ENCODE measurements at regions of chr6 and their contacts with region 1.

Region 1: DNA sequence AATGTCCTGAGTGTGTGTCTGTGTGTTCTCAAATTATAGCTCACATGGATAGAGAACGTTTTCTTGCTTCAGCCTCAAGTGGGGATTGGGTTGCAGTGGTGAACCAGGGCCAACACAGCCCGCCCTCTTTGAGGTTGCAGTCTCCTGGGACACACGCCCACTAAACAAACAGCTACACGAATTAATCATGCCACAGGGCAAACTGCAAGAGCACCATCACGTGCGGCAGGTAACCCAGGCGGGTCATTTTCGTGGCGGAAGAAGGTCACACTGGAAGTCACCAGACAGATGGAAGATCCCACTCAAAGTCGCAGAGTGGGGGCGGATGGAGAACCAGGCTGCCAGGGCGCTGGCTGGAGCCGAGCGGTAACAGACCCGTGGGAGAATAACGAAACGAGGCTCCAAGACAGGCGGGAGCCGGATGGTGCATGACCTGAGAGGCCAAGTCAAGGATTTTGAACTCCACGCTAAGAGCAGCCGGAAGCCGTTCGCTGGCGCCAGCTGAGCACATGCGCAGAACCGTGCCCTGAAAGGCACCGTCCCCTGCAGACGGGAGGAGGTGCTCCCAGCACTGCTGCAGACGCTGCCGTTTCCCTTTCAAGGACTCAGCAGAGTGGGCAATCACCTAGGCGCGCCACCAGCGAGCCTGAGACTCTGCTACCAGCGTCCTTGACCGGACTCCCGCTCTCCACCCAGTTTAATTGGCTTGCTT is 10.7 kb downstream of the DLL1 start:
- DNase-seq: peak in 3 of 10 donors; percentile 27 to 36 (median 34)
- H3K4me3 ChIP-seq: peak overlapping the region in 45 of 59 donors; percentile 4 to 57 (median 28)
- H3K27ac ChIP-seq: peak overlapping the region in 8 of 59 donors; percentile 6 to 54 (median 23)
- H3K27me3 ChIP-seq: no peaks in the 10 kb centered on the region
- CTCF ChIP-seq: no peak

Region 2: DNA sequence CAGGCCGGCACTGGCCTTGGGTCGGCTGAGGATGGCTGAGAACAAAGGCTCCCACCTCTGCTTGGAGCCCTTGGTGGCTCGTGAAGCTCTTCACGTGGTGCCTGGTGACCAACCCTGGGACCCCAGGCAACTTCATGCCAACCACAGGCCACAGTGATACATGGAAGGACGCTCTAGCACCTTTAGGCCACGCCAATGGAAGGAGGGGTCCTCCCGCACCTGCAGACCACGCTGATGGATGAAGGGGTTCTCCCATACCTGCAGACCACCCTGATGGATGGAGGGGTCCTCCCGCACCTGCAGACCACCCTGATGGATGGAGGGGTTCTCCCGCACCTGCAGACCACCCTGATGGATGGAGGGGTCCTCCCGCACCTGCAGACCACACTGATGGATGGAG is 466.2 kb before region 1 on chr6:
- intact Hi-C with region 1: no loop called
- DNase-seq: peak in 2 of 10 donors; percentile 17 to 23
- H3K4me3 ChIP-seq: no peak overlapping the region
- H3K27ac ChIP-seq: no peak overlapping the region
- H3K27me3 ChIP-seq: no peaks in the 10 kb centered on the region
- CTCF ChIP-seq: no peak

Region 3: GRCh38 chr6:170024952-170025911 is 254.9 kb before region 1 on chr6:
- intact Hi-C with region 1: no loop called
- DNase-seq: peak in 3 of 10 donors; percentile 31 to 36 (median 34)
- H3K4me3 ChIP-seq: no peak overlapping the region
- H3K27ac ChIP-seq: no peak overlapping the region
- H3K27me3 ChIP-seq: peaks cover 0 to 20% (median 0%) of the 10 kb centered on the region in 45 donors
- CTCF ChIP-seq: no peak

Region 4: DNA sequence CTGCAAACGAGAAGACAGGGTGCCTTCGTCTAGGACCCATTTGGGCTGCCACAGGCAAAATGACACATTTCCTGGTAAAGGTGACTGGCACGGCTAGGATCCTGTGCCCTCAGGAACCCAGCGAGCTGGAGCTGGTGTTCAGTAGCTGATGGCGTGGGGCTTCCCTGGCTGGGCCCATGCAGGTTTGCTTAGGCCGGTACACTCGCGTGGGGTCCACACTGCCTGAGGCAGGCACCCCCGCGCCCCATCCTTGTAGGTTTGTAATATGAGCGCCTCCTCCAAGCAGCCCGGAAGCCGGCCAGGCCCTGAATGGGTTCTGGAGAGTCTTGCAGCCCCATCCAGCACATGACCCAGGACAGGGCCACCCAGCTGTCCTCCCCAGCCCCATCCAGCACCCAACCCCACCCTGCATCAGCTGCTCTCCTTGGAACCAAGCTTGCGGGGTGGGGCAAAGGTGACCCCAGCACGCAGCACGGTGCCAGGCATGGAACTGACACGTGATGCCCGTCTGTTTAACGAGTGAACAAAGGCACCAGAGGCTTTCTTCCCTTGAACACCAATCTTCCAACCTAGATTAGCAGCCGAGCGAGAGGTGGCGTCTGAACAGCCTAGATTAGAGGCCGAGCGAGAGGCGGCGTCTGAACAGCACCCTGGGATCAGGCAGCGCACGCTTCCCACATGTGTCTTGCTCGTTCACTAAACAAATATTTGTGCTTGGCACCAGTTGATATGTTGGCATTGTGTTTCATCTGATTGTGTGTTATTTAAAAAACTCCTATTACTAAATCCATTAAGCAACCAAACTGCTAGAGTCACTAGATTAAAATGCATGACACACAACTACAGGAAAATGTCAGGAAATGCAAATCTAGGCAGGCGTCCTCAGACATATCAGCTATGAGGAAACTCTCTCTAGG is 101.3 kb before region 1 on chr6:
- intact Hi-C with region 1: loop called in 1 of 2 experiments (anchors 5 kb)
- DNase-seq: peak in 3 of 10 donors; percentile 2 to 40 (median 27)
- H3K4me3 ChIP-seq: no peak overlapping the region
- H3K27ac ChIP-seq: peak overlapping the region in 1 of 59 donors; percentile 4
- H3K27me3 ChIP-seq: no peaks in the 10 kb centered on the region
- CTCF ChIP-seq: no peak

Region 5: GRCh38 chr6:170231546-170232185 is 48.5 kb before region 1 on chr6:
- intact Hi-C with region 1: loop called in 1 of 2 experiments (anchors 5 kb)
- DNase-seq: peak in 1 of 10 donors; percentile 8
- H3K4me3 ChIP-seq: no peak overlapping the region
- H3K27ac ChIP-seq: peak overlapping the region in 10 of 59 donors; percentile 3 to 80 (median 28)
- H3K27me3 ChIP-seq: no peaks in the 10 kb centered on the region
- CTCF ChIP-seq: no peak

Region 6: GRCh38 chr6:170329321-170329720 is 49.2 kb after region 1 on chr6:
- intact Hi-C with region 1: no loop called
- DNase-seq: no peak
- H3K4me3 ChIP-seq: no peak overlapping the region
- H3K27ac ChIP-seq: no peak overlapping the region
- H3K27me3 ChIP-seq: no peaks in the 10 kb centered on the region
- CTCF ChIP-seq: no peak

Measured in dorsolateral prefrontal cortex (tissue), 120 donors.